GM13976 (cell line): ENCODE measurements at regions of chr5 and their contacts with region 1.

Region 1: GRCh38 chr5:59371525-59372127 is 521.9 kb downstream of the PDE4D start:
- DNase-seq: no peak
- CTCF ChIP-seq: no peak

Region 2: GRCh38 chr5:59188419-59189225 is 183.0 kb before region 1 on chr5:
- in situ Hi-C with region 1: loop called (anchors 10 kb)
- DNase-seq: peak; percentile 35
- CTCF ChIP-seq: peak; percentile 43